Heart right ventricle (tissue), 16 donors: ENCODE measurements at regions of chr7 and their contacts with region 1.

Region 1: GRCh38 chr7:6476596-6477299 is 29.0 kb upstream of the DAGLB start:
- DNase-seq: no peak
- ATAC-seq: peak in 1 of 8 donors; percentile 27
- H3K4me3 ChIP-seq: no peak overlapping the region
- H3K27ac ChIP-seq: no peak overlapping the region
- H3K4me1 ChIP-seq: peaks cover 3 to 61% (median 49%) of the 10 kb centered on the region in 9 donors
- H3K27me3 ChIP-seq: no peaks in the 10 kb centered on the region
- CTCF ChIP-seq: no peak

Region 2: GRCh38 chr7:6451224-6451705 is 25.5 kb before region 1 on chr7:
- intact Hi-C with region 1: loop called in 1 of 10 experiments (anchors 2 kb)
- DNase-seq: no peak
- ATAC-seq: no peak
- H3K4me3 ChIP-seq: no peak overlapping the region
- H3K27ac ChIP-seq: no peak overlapping the region
- H3K4me1 ChIP-seq: peaks cover 2 to 19% (median 9%) of the 10 kb centered on the region in 9 donors
- H3K27me3 ChIP-seq: no peaks in the 10 kb centered on the region
- CTCF ChIP-seq: no peak

Region 3: GRCh38 chr7:7212612-7213011 is 735.9 kb after region 1 on chr7:
- intact Hi-C with region 1: no loop called
- DNase-seq: no peak
- ATAC-seq: peak in 3 of 8 donors; percentile 39 to 63 (median 62)
- H3K4me3 ChIP-seq: no peak overlapping the region
- H3K27ac ChIP-seq: peak overlapping the region in 1 of 10 donors; percentile 51
- H3K4me1 ChIP-seq: peaks cover 0 to 9% (median 0%) of the 10 kb centered on the region in 9 donors
- H3K27me3 ChIP-seq: no peaks in the 10 kb centered on the region
- CTCF ChIP-seq: no peak